Endothelial cell of umbilical vein (primary cell): ENCODE measurements at regions of chr18 and their contacts with region 1.

Region 1: GRCh38 chr18:23703057-23703986 is 14.1 kb downstream of the LAMA3 start:
- DNase-seq: peak; percentile 80
- H3K4me3 ChIP-seq: no peak overlapping the region
- H3K27ac ChIP-seq: no peak overlapping the region
- H3K4me1 ChIP-seq: no peaks in the 10 kb centered on the region
- H3K27me3 ChIP-seq: no peaks in the 10 kb centered on the region
- CTCF ChIP-seq: peak; percentile 35 to 49
- POLR2A ChIP-seq: no peak

Region 2: DNA sequence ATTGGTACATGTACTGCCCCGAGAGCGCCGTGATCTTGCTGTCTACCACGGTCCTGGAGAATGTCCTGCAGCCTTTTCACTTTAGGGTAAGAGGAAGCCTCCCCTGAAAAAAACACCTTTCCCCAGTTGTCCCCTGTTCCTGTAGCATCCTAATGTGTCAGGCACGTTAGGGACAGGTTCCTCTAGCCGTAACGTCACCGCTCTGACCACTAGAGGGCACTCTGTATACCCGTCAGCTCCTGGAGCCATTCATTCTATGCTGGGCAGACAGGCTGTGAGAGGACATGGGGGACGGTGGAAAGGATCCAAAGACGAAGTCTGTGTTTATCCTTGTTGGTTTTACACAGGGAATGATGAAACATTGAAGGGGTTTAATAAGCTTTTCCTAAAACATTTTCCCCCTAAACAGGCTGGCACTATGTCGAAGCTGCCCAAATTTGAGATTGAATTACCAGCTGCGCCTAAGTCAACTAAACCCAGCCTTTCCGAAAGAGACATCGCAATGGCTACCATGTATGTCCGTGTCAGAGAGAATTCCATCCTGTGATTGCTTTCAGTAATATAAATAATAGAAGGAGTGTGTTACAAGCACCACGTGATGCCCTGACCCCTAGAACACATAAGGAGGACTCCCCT is 187.3 kb before region 1 on chr18:
- CTCF ChIA-PET with region 1: interaction called, 35 read pairs
- POLR2A ChIA-PET with region 1: no interaction called
- dilution Hi-C with region 1: no loop called
- intact Hi-C with region 1: loop called (anchors 1 kb)
- DNase-seq: peak; percentile 71
- H3K4me3 ChIP-seq: no peak overlapping the region
- H3K27ac ChIP-seq: no peak overlapping the region
- H3K4me1 ChIP-seq: peaks cover 11% of the 10 kb centered on the region
- H3K27me3 ChIP-seq: no peaks in the 10 kb centered on the region
- CTCF ChIP-seq: peak; percentile 89 to 94
- POLR2A ChIP-seq: no peak

Region 3: GRCh38 chr18:23612435-23613085 is 90.8 kb before region 1 on chr18:
- CTCF ChIA-PET with region 1: interaction called, 34 read pairs
- POLR2A ChIA-PET with region 1: no interaction called
- dilution Hi-C with region 1: no loop called
- intact Hi-C with region 1: no loop called
- DNase-seq: no peak
- H3K4me3 ChIP-seq: no peak overlapping the region
- H3K27ac ChIP-seq: no peak overlapping the region
- H3K4me1 ChIP-seq: no peaks in the 10 kb centered on the region
- H3K27me3 ChIP-seq: peaks cover 5 to 10% of the 10 kb centered on the region in 2 experiments
- CTCF ChIP-seq: no peak
- POLR2A ChIP-seq: no peak

Region 4: DNA sequence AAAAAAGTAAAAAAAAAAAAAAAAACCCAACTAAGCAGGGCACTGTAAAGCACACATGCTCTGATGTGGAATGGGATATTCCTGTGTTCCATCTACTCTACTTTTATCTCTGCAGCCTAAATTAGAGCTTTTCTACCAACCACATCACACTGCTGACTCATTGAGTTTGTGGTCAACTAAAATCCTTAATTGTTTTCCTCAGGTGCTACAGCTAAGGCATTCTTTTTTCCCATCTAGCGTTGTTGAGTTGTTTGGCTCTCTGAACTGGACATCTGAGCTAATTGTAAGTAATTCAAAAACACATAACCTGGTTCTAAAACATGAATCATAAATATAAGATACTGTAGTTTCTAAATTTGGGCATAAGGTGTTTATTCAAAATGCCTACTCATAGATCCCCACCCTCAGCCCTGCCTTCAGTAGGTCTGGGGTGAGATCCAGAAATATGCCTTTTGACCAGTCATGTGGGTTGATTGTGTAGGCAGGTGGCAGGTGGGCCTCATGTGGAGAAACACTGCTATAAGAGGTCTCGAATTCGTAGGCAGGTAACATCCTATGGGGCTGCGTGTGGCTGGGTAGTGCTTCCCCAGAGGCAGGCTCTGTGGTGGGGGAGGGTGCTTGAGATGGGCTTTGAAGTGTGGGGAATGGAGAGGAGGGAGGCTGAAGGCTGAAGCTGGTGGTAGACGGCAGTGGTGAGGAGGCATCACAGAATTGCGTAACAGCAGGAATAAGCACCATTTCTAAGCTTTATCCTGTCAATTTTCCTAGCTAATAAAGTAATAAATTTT is 67.8 kb before region 1 on chr18:
- CTCF ChIA-PET with region 1: interaction called, 12 read pairs
- POLR2A ChIA-PET with region 1: no interaction called
- dilution Hi-C with region 1: no loop called
- intact Hi-C with region 1: no loop called
- DNase-seq: no peak
- H3K4me3 ChIP-seq: no peak overlapping the region
- H3K27ac ChIP-seq: no peak overlapping the region
- H3K4me1 ChIP-seq: no peaks in the 10 kb centered on the region
- H3K27me3 ChIP-seq: peaks cover 0 to 4% of the 10 kb centered on the region in 2 experiments
- CTCF ChIP-seq: no peak
- POLR2A ChIP-seq: no peak

Region 5: DNA sequence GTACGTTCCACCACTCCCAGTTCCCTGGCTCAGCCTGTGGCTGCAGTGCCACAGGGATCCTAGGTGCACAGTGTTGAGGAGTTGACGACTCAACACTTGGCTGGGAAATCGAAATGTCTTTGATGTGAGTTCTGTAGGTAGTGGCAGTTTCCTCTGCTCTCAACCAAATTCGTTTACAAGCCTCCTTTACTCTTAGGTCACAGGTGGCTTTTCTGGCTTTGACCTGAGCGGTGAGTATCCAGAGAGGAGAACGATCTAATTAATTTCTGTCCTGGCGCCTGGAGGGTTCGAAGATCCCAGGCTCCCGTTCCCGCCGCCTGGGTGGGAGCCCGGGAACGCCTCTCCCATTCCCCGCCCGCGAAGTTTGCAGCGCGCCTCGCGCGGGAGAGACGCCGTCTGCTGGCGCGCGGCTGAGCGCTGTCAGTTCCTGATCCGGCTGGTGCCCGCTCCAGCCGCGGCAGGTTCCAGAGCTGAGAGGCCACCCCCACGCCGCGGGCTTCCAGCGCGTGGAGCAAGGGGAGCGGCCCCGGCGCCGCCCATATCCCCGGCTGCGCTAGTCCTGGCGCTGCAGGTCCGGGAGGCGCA is 14.2 kb before region 1 on chr18 and contains the start of gene LAMA3:
- CTCF ChIA-PET with region 1: interaction called, 21 read pairs
- POLR2A ChIA-PET with region 1: no interaction called
- dilution Hi-C with region 1: no loop called
- intact Hi-C with region 1: no loop called
- DNase-seq: peak; percentile 53
- H3K4me3 ChIP-seq: peak within 1 kb of the TSS; percentile 36 to 76 (median 50)
- H3K27ac ChIP-seq: no peak within 1 kb of the TSS
- H3K4me1 ChIP-seq: peaks cover 13% of the 10 kb centered on the region
- H3K27me3 ChIP-seq: no peaks in the 10 kb centered on the region
- CTCF ChIP-seq: peak; percentile 7 to 33
- POLR2A ChIP-seq: no peak
- total RNA-seq, gene LAMA3: 7.1 and 12.3 TPM in 2 replicates

Region 6: DNA sequence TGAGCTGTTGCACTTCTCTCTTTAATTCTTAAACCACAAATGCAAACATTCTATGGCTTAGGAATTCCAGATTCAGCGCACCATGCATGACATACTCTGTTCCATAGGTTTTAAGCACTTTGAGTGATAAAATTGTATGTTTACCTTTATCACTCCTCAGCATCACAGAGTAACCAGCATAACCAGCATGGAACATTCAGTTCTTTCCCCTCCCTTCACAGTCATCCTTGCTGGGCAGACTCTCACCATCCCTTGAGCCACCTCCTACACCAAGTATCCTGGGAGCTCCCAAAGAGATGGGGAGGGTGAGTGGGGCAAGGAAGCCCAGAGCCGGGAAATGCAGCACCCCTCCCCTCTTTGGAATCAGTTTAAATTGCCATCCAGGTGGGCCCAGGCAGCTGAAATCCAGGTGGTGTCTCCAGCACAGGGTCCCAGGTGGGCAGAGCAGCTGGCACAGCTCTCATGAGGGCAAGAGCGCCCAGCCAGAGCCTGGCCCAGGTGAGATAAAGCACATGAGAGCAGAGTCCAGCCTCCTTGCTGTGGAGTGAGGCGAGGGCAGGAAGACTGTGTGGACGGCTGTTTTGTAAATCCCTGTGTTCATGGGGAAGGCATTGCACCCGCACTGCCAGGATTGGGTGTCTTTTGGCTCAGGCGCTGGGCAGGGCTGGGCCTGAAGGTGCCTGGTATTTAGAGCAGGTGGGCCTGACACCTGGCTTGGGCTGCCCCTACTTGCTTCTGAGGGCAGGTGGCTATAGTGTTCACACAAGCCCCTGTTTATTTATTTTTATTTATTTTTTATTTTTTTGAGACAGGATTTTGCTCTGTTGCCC is 22.7 kb after region 1 on chr18:
- CTCF ChIA-PET with region 1: interaction called, 10 read pairs
- POLR2A ChIA-PET with region 1: no interaction called
- dilution Hi-C with region 1: no loop called
- intact Hi-C with region 1: no loop called
- DNase-seq: no peak
- H3K4me3 ChIP-seq: no peak overlapping the region
- H3K27ac ChIP-seq: no peak overlapping the region
- H3K4me1 ChIP-seq: no peaks in the 10 kb centered on the region
- H3K27me3 ChIP-seq: no peaks in the 10 kb centered on the region
- CTCF ChIP-seq: no peak
- POLR2A ChIP-seq: no peak